H1 (cell line): ENCODE measurements at regions of chr1 and their contacts with region 1.

Region 1: GRCh38 chr1:1004780-1005697 is 5.1 kb upstream of the HES4 start:
- DNase-seq: no peak
- H3K4me3 ChIP-seq: no peak overlapping the region
- H3K27ac ChIP-seq: no peak overlapping the region
- H3K4me1 ChIP-seq: peaks cover 0 to 28% (median 10%) of the 10 kb centered on the region in 4 experiments; a peak in 3 of 7 replicates
- H3K27me3 ChIP-seq: peaks cover 15 to 52% (median 32%) of the 10 kb centered on the region in 4 experiments
- CTCF ChIP-seq: no peak
- EP300 ChIP-seq: no peak
- POLR2A ChIP-seq: no peak
- RAD21 ChIP-seq: no peak

Region 2: GRCh38 chr1:1019122-1019999 is 14.3 kb after region 1 on chr1:
- CTCF ChIA-PET with region 1: interaction called, 60 read pairs
- POLR2A ChIA-PET with region 1: interaction called, 40 read pairs
- DNase-seq: peak in 1 of 2 experiments; percentile 84
- H3K4me3 ChIP-seq: peak overlapping the region in 2 of 4 experiments; percentile 45 to 83; a peak in 2 of 8 replicates
- H3K27ac ChIP-seq: no peak overlapping the region; the same call in 1 of the 2 replicates
- H3K4me1 ChIP-seq: peaks cover 2 to 36% (median 27%) of the 10 kb centered on the region in 4 experiments
- H3K27me3 ChIP-seq: no peaks in the 10 kb centered on the region
- CTCF ChIP-seq: peak in 2 of 3 experiments; percentile 38 to 42; a peak in 2 of 4 replicates
- EP300 ChIP-seq: no peak
- POLR2A ChIP-seq: no peak; a peak in 1 of 3 replicates
- RAD21 ChIP-seq: no peak